Activated CD8-positive, alpha-beta T cell treated with anti-CD3 and anti-CD28 coated beads for 36 hours (primary cell): ENCODE measurements at regions of chr3 and their contacts with region 1.

Region 1: GRCh38 chr3:42247576-42248027 is 18.4 kb downstream of the CCK start:
- DNase-seq: peak; percentile 75
- ATAC-seq: peak; percentile 70
- H3K4me3 Mint-ChIP-seq: no peak overlapping the region
- H3K27ac Mint-ChIP-seq: no peak overlapping the region
- H3K4me1 Mint-ChIP-seq: peaks cover 3% of the 10 kb centered on the region
- H3K27me3 Mint-ChIP-seq: peaks cover 2% of the 10 kb centered on the region
- CTCF ChIP-seq: peak; percentile 94

Region 2: GRCh38 chr3:42139621-42140453 is 107.8 kb before region 1 on chr3:
- CTCF ChIA-PET with region 1: no interaction called
- POLR2A ChIA-PET with region 1: no interaction called
- intact Hi-C with region 1: no loop called
- DNase-seq: no peak
- ATAC-seq: no peak
- H3K4me3 Mint-ChIP-seq: no peak overlapping the region
- H3K27ac Mint-ChIP-seq: no peak overlapping the region
- H3K4me1 Mint-ChIP-seq: peaks cover 11% of the 10 kb centered on the region
- H3K27me3 Mint-ChIP-seq: no peaks in the 10 kb centered on the region
- CTCF ChIP-seq: no peak

Region 3: GRCh38 chr3:42264399-42265058 is 16.9 kb after region 1 on chr3:
- CTCF ChIA-PET with region 1: interaction called, 27 read pairs
- POLR2A ChIA-PET with region 1: no interaction called
- intact Hi-C with region 1: no loop called
- DNase-seq: peak; percentile 54
- ATAC-seq: peak; percentile 69
- H3K4me3 Mint-ChIP-seq: no peak overlapping the region
- H3K27ac Mint-ChIP-seq: no peak overlapping the region
- H3K4me1 Mint-ChIP-seq: peaks cover 8% of the 10 kb centered on the region
- H3K27me3 Mint-ChIP-seq: peaks cover 61% of the 10 kb centered on the region
- CTCF ChIP-seq: no peak

Region 4: GRCh38 chr3:42425736-42426407 is 178.3 kb after region 1 on chr3:
- CTCF ChIA-PET with region 1: interaction called, 14 read pairs
- POLR2A ChIA-PET with region 1: no interaction called
- intact Hi-C with region 1: no loop called
- DNase-seq: no peak
- ATAC-seq: no peak
- H3K4me3 Mint-ChIP-seq: no peak overlapping the region
- H3K27ac Mint-ChIP-seq: no peak overlapping the region
- H3K4me1 Mint-ChIP-seq: no peaks in the 10 kb centered on the region
- H3K27me3 Mint-ChIP-seq: peaks cover 17% of the 10 kb centered on the region
- CTCF ChIP-seq: no peak

Region 5: GRCh38 chr3:42443819-42444436 is 196.3 kb after region 1 on chr3:
- CTCF ChIA-PET with region 1: interaction called, 139 read pairs
- POLR2A ChIA-PET with region 1: no interaction called
- intact Hi-C with region 1: loop called (anchors 1 kb)
- DNase-seq: peak; percentile 83
- ATAC-seq: peak; percentile 91
- H3K4me3 Mint-ChIP-seq: no peak overlapping the region
- H3K27ac Mint-ChIP-seq: no peak overlapping the region
- H3K4me1 Mint-ChIP-seq: no peaks in the 10 kb centered on the region
- H3K27me3 Mint-ChIP-seq: peaks cover 6% of the 10 kb centered on the region
- CTCF ChIP-seq: peak; percentile 91